ENCODE measurements at regions of chr16 and their contacts with region 1.

Region 1: DNA sequence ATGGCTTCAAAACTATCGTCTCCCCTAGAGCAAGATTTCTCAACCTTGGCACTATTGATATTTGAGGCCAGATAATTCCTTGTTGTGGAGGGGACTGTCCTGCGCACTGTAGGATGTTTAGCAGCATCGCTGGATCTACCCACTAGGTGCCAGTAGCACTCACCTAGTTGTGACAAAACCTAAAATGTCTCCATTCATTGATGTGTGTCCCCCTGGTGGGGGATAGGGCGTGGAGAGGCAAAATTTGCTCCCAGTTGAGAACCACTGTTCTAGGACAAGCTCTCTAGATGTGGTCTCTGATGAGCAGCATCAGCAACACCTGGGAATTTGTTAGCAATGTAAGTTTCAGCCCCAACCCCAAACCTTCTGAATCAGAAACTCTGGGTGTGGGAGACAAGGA is 259.0 kb downstream of the XYLT1 start:
- DNase-seq: peak in 1 of 2 experiments; percentile 67
- H3K4me3 ChIP-seq: no peak overlapping the region
- H3K27ac ChIP-seq: no peak overlapping the region
- H3K4me1 ChIP-seq: peaks cover 0 to 10% (median 6%) of the 10 kb centered on the region in 4 experiments; a peak in 4 of 7 replicates
- H3K27me3 ChIP-seq: no peaks in the 10 kb centered on the region
- CTCF ChIP-seq: peak; percentile 69 to 99 (median 95)
- EP300 ChIP-seq: no peak
- POLR2A ChIP-seq: no peak
- RAD21 ChIP-seq: peak; percentile 82 to 84

Region 2: DNA sequence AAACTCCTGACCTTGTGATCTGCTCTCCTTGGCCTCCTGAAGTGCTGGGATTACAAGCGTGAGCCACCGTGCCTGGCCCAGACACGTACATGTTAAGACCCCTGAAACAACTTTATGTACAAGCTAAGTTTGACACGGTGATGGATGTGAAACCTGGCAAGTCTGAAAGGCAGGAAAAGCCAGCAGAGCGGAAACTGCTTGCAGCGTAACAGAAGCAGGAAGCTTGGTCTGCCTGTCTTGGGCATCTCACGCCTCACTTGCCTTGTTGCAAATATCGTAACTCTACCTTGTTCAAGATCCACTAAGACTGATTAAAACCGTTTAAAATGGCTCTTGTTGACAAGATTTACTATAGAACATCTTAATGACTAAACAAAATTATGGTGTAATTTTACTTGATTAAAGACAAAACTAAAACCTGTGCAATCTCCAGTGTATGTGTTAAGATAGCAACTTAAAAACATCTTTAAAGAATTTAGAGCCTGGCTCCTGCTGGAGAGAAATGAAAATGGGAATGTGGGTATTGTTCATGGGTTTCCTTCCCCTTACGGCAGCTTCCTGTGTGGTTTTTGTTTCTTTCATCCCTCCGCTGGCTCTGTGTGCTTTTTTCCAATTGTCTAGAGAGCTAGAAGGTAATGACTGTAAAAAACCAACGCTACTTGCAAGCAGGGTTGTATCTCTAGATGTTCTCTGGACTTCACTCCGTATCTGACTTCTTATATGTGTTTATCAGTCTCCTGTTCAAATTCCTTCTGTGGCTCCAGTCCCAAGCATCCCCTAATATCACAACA is 218.6 kb before region 1 on chr16:
- CTCF ChIA-PET with region 1: no interaction called
- POLR2A ChIA-PET with region 1: no interaction called
- DNase-seq: no peak
- H3K4me3 ChIP-seq: no peak overlapping the region
- H3K27ac ChIP-seq: no peak overlapping the region
- H3K4me1 ChIP-seq: no peaks in the 10 kb centered on the region
- H3K27me3 ChIP-seq: no peaks in the 10 kb centered on the region
- CTCF ChIP-seq: no peak
- EP300 ChIP-seq: no peak
- POLR2A ChIP-seq: no peak
- RAD21 ChIP-seq: no peak

Region 3: GRCh38 chr16:17129971-17130370 is 81.8 kb before region 1 on chr16:
- CTCF ChIA-PET with region 1: no interaction called
- POLR2A ChIA-PET with region 1: no interaction called
- DNase-seq: no peak
- H3K4me3 ChIP-seq: no peak overlapping the region
- H3K27ac ChIP-seq: no peak overlapping the region
- H3K4me1 ChIP-seq: peaks cover 0 to 4% (median 2%) of the 10 kb centered on the region in 4 experiments; a peak in 3 of 7 replicates
- H3K27me3 ChIP-seq: no peaks in the 10 kb centered on the region
- CTCF ChIP-seq: no peak
- EP300 ChIP-seq: no peak
- POLR2A ChIP-seq: no peak
- RAD21 ChIP-seq: no peak

Region 4: DNA sequence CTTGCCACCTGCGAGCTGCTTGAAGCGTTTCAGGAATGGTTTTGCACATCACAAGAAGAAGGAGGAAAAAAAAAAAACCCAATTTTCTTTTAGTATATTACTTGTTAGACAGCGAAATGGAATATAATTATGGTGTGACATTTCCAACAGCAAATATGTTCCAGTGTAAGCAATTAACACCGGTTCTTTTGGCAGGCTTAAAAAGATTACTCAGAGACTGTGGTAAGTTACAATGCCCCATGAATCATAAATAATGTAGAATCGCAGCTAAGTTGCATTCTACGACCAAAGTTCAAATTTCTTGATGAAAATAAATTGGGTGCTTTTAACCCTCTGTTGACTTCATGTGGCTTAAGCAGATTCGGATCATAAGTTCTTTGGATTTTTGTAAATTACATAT is 13.7 kb after region 1 on chr16:
- CTCF ChIA-PET with region 1: interaction called, 13 read pairs
- POLR2A ChIA-PET with region 1: no interaction called
- DNase-seq: no peak
- H3K4me3 ChIP-seq: no peak overlapping the region
- H3K27ac ChIP-seq: no peak overlapping the region
- H3K4me1 ChIP-seq: peaks cover 0 to 20% (median 0%) of the 10 kb centered on the region in 4 experiments; a peak in 2 of 7 replicates
- H3K27me3 ChIP-seq: no peaks in the 10 kb centered on the region
- CTCF ChIP-seq: no peak
- EP300 ChIP-seq: no peak
- POLR2A ChIP-seq: no peak
- RAD21 ChIP-seq: no peak

Region 5: GRCh38 chr16:17364319-17365210 is 152.8 kb after region 1 on chr16:
- CTCF ChIA-PET with region 1: no interaction called
- POLR2A ChIA-PET with region 1: no interaction called
- DNase-seq: no peak
- H3K4me3 ChIP-seq: no peak overlapping the region
- H3K27ac ChIP-seq: no peak overlapping the region
- H3K4me1 ChIP-seq: peaks cover 0 to 13% (median 10%) of the 10 kb centered on the region in 4 experiments; a peak in 5 of 7 replicates
- H3K27me3 ChIP-seq: no peaks in the 10 kb centered on the region
- CTCF ChIP-seq: no peak
- EP300 ChIP-seq: no peak
- POLR2A ChIP-seq: no peak
- RAD21 ChIP-seq: no peak

Measured in H1 (cell line).